Naive thymus-derived CD4-positive, alpha-beta T cell (primary cell): ENCODE measurements at regions of chr21 and their contacts with region 1.

Region 1: DNA sequence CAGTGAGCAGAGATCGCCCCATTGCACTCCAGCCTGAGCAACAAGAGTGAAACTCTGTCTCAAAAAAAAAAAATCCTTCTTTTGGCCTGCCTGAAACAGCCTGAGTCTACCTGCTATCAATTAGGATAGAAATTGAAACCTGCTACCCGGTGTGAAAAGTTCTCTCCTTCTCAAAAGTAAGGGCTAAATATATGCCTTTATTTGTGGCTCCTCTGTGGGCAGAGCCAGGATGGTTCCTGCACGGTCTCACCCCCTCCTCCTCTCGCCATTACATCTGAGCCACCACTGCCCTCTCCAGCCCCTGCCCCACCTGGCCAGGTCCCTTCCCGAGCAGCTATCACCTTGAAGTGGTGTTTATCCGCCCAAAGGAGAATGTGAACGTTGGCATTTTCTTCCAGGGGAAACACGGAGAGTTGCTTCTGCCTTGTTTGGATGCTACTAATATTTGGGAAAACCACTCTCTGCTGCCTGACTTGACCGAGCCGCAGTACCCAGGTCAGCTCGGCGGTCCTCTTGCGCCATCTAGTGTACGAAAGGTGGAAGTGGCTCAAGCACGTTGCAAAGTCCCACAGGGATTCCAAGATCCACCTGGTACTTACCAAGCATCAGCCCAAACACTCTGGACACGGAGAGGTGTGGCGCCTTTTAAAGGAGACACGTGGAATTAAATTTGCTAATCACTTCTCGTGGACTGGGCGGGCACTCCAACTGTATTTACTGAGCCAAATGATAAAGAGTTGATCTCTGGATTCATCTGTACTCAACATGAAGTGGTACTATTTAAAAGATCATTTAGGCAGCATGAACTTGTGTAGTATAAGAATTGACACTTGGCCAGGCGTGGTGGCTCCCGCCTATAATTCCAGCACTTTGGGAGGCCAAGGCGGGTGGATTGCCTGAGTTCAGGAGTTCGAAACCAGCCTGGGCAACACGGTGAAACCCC is 31.9 kb downstream of the SETD4 start:
- DNase-seq: peak; percentile 39 to 73 (median 62)
- ATAC-seq: peak; percentile 87
- H3K4me3 ChIP-seq: no peak overlapping the region
- H3K4me3 Mint-ChIP-seq: peak overlapping the region in 2 of 10 donors; percentile 22 to 25
- H3K27ac ChIP-seq: no peak overlapping the region
- H3K27ac Mint-ChIP-seq: no peak overlapping the region
- H3K4me1 ChIP-seq: peaks cover 0 to 4% of the 10 kb centered on the region in 2 donors
- H3K4me1 Mint-ChIP-seq: peaks cover 4 to 10% (median 5%) of the 10 kb centered on the region in 7 donors
- H3K27me3 ChIP-seq: no peaks in the 10 kb centered on the region
- H3K27me3 Mint-ChIP-seq: no peaks in the 10 kb centered on the region

Region 2: DNA sequence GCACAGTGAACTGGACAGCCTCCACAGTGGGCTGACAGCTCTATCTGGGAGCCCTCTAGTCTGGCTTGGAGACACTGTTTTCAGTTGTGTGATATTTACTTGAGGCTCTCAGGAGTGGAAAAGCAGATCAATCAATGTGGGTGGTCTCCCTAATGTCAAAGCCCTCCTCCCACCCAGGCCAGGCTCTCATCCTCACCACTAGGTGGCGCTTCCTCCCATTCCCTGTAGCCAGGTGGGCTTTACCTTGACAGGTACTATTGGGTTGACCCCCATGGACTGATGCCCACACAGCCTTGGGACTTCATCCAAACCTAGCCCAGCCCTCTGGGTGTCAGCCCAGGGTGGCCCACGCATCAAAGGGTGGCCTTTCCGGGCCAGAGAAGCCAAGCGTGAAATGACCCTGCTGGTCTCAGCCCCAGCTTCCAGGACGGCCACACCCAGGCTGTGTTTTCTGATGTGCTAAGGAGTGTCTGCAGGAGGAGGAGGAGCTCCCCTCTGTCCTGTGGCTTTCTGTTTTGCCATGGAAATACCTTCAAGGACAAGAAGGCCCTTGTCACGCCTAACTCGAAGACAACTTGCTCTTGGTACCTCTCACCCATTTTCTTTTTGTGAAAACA is 1305.6 kb before region 1 on chr21:
- CTCF ChIA-PET with region 1: interaction called, 3 read pairs
- POLR2A ChIA-PET with region 1: no interaction called
- intact Hi-C with region 1: loop called in 1 of 2 experiments (anchors 1 kb)
- DNase-seq: peak in 4 of 9 donors; percentile 8 to 38 (median 22)
- ATAC-seq: no peak
- H3K4me3 ChIP-seq: no peak overlapping the region
- H3K4me3 Mint-ChIP-seq: no peak overlapping the region
- H3K27ac ChIP-seq: no peak overlapping the region
- H3K27ac Mint-ChIP-seq: no peak overlapping the region
- H3K4me1 ChIP-seq: no peaks in the 10 kb centered on the region
- H3K4me1 Mint-ChIP-seq: peaks cover 0 to 9% (median 0%) of the 10 kb centered on the region in 7 donors
- H3K27me3 ChIP-seq: no peaks in the 10 kb centered on the region
- H3K27me3 Mint-ChIP-seq: peaks cover 4 to 16% (median 10%) of the 10 kb centered on the region in 5 donors

Region 3: DNA sequence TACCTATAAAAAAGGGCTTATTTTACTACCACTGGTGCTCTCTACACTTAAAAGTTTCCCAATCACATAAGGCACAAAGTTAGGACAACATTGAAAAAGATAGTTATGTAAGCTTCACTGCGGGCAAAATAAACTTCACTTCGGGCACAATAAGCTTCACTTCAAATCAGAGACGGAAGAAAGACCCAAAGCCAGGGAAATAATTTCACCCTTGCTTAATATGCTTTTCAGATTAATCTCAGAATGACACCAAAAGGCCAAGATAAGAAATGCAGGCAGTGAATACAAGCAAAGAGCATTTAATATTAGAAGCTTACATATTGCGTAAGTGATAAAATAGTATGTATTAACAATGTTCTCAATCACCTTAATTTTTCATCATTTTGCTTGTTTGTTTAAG is 412.3 kb before region 1 on chr21:
- CTCF ChIA-PET with region 1: no interaction called
- POLR2A ChIA-PET with region 1: no interaction called
- intact Hi-C with region 1: loop called in 1 of 2 experiments (anchors 10 kb)
- DNase-seq: peak in 6 of 9 donors; percentile 2 to 44 (median 28)
- ATAC-seq: no peak
- H3K4me3 ChIP-seq: no peak overlapping the region
- H3K4me3 Mint-ChIP-seq: no peak overlapping the region
- H3K27ac ChIP-seq: no peak overlapping the region
- H3K27ac Mint-ChIP-seq: no peak overlapping the region
- H3K4me1 ChIP-seq: no peaks in the 10 kb centered on the region
- H3K4me1 Mint-ChIP-seq: peaks cover 0 to 6% (median 3%) of the 10 kb centered on the region in 7 donors
- H3K27me3 ChIP-seq: no peaks in the 10 kb centered on the region
- H3K27me3 Mint-ChIP-seq: peaks cover 0 to 11% (median 0%) of the 10 kb centered on the region in 5 donors

Region 4: DNA sequence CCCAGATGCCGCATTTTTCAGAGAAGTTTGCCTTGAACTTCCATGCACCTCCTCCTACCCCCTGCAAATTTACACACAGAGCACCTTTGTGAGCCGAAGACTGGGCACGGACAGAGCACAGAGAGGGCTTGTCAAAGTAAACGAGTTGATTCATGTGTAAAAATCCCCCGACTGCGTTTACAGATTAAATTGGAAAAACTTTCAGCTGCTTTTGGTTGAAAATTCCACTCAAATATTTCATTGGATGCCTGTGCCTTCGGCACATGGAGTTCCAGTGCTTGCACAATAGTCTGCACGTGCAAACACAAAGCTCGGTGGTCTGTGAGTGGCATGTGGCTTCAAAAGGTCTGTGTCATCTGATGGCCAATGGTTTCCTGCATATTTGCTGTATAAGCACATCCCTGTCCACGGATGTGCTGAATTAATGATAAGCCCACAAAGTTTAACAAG is 145.6 kb before region 1 on chr21:
- CTCF ChIA-PET with region 1: no interaction called
- POLR2A ChIA-PET with region 1: no interaction called
- intact Hi-C with region 1: loop called in 1 of 2 experiments (anchors 10 kb)
- DNase-seq: no peak
- ATAC-seq: no peak
- H3K4me3 ChIP-seq: no peak overlapping the region
- H3K4me3 Mint-ChIP-seq: no peak overlapping the region
- H3K27ac ChIP-seq: no peak overlapping the region
- H3K27ac Mint-ChIP-seq: no peak overlapping the region
- H3K4me1 ChIP-seq: no peaks in the 10 kb centered on the region
- H3K4me1 Mint-ChIP-seq: no peaks in the 10 kb centered on the region
- H3K27me3 ChIP-seq: no peaks in the 10 kb centered on the region
- H3K27me3 Mint-ChIP-seq: peaks cover 5 to 31% (median 11%) of the 10 kb centered on the region in 5 donors